Adrenal gland (tissue), 19 donors: ENCODE measurements at regions of chr19 and their contacts with region 1.

Region 1: DNA sequence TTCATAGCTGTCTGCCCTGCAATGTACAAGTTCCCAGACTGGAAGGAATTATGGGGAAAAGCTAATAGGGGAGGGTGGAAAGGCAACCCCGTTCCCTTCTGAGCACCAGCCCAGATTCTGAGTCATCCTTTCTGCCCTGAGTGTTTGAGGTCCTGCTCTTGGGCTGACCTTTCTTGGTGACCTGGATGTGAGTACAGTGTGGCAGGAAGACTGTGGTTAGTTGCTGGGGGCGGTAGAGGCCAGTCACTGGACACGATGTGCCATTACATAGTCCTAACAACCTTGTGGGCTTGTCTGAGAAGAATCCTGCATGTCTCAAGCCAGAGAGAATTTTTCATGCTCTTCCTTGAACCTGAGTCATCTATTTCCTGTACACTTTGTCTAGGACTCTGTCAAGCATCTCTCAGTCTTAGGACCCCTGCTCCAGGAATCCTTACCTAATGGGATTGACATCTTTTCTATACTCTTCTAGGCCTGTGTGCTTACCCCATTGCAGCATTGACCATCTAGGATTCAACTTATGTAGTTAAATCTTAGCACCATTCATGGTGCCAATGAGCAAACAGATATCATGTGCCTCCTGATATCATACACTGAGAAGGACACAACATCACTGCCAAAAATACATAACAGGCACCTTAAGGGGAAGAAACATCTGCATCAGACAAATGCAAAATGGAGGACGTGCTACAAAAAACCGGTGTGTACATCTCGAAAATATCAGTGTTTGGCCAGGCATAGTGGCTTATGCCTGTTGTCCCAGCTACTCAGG is 8.1 kb upstream of the ANGPTL4 start:
- DNase-seq: peak in 6 of 7 donors; percentile 78 to 89 (median 80)
- H3K4me3 ChIP-seq: no peak overlapping the region
- H3K27ac ChIP-seq: peak overlapping the region in 4 of 5 donors; percentile 44 to 83 (median 58)
- H3K4me1 ChIP-seq: peaks cover 5 to 19% of the 10 kb centered on the region in 2 donors
- H3K27me3 ChIP-seq: no peaks in the 10 kb centered on the region
- CTCF ChIP-seq: no peak
- POLR2A ChIP-seq: peak in 1 of 2 donors; percentile 22

Region 2: GRCh38 chr19:8185343-8186068 is 170.3 kb before region 1 on chr19:
- intact Hi-C with region 1: no loop called
- DNase-seq: no peak
- H3K4me3 ChIP-seq: no peak overlapping the region
- H3K27ac ChIP-seq: no peak overlapping the region
- H3K4me1 ChIP-seq: no peaks in the 10 kb centered on the region
- H3K27me3 ChIP-seq: no peaks in the 10 kb centered on the region
- CTCF ChIP-seq: no peak
- POLR2A ChIP-seq: no peak

Region 3: DNA sequence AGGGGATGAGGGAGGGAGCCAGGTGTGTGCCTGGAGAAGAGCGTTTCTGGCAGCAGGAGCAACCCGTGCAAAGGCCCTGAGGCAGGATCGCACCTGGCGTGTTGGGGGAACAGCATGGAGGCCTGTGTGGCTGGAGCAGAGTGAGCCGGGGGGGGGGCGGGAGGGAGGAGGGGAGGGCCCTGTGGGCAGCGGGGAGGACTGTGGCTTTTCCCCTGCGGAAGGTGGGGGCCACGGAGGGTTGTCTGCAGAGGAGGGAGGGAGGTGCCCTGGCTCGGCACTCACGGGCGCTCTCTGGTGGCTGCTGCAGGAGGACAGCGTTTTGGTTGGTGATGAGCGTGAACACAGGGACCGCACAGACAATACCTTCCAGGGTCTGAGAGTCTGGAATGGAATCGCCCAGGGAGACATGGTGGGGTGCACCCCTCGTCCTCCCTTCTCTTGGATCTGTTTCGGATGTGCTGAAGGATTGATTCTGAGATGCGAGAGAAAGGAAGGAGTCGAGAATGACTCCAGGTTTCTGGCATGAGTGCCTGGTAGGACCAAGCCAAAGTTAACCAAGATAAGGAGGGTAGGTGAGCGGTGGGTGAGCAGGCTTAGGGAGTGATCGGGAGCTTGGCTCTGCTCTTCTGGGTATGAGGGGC is 40.9 kb after region 1 on chr19:
- intact Hi-C with region 1: loop called (anchors 2 to 5 kb)
- DNase-seq: peak; percentile 50 to 81 (median 66)
- H3K4me3 ChIP-seq: no peak overlapping the region
- H3K27ac ChIP-seq: no peak overlapping the region
- H3K4me1 ChIP-seq: peaks cover 26 to 54% of the 10 kb centered on the region in 2 donors
- H3K27me3 ChIP-seq: no peaks in the 10 kb centered on the region
- CTCF ChIP-seq: peak; percentile 24 to 75 (median 58)
- POLR2A ChIP-seq: no peak

Region 4: DNA sequence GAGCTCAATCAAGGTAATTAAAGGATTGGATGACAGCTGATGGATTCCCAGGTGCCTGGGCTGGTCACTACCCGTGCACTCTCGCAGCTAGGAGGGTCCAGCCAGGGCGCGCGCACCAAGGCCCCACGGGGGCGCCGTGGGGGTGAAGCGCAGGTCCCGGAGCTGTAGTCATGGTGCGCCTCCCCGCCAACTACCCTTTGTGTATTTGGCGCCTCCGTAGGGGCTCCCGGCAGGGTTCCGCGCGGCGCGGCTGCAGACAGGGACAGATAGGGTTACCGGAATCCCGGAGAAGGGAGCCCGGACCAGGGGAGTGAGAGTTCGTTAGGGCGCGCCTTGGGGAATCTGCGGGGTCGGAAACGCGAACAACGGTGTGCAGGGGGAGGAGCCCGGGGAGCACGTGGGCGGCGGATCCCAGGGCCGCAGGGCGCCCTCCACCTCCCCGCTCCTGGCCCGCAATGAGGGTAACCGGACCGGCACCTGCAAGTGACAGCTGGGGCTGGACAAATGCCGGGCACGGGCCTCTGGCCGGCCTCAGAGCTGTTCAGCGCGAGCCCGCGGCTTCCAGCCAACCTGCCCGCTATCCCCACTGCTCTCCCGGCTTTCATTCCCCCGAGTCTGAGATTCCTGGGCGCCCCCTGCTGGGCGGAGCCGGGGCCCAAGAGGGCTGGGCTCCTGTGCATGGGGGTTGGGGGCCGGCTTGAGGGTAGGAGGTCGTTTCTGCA is 150.0 kb after region 1 on chr19:
- intact Hi-C with region 1: loop called (anchors 5 to 10 kb)
- DNase-seq: peak; percentile 72 to 87 (median 84)
- H3K4me3 ChIP-seq: peak overlapping the region in 2 of 4 donors; percentile 60 to 62
- H3K27ac ChIP-seq: peak overlapping the region in 2 of 5 donors; percentile 6 to 24
- H3K4me1 ChIP-seq: peaks cover 11 to 12% of the 10 kb centered on the region in 2 donors
- H3K27me3 ChIP-seq: no peaks in the 10 kb centered on the region
- CTCF ChIP-seq: peak; percentile 75 to 88 (median 86)
- POLR2A ChIP-seq: no peak

Region 5: GRCh38 chr19:8517551-8518442 is 162.0 kb after region 1 on chr19:
- intact Hi-C with region 1: no loop called
- DNase-seq: peak in 3 of 7 donors; percentile 43 to 55 (median 49)
- H3K4me3 ChIP-seq: no peak overlapping the region
- H3K27ac ChIP-seq: peak overlapping the region in 2 of 5 donors; percentile 67 to 79
- H3K4me1 ChIP-seq: peaks cover 15 to 18% of the 10 kb centered on the region in 2 donors
- H3K27me3 ChIP-seq: no peaks in the 10 kb centered on the region
- CTCF ChIP-seq: no peak
- POLR2A ChIP-seq: no peak

Region 6: DNA sequence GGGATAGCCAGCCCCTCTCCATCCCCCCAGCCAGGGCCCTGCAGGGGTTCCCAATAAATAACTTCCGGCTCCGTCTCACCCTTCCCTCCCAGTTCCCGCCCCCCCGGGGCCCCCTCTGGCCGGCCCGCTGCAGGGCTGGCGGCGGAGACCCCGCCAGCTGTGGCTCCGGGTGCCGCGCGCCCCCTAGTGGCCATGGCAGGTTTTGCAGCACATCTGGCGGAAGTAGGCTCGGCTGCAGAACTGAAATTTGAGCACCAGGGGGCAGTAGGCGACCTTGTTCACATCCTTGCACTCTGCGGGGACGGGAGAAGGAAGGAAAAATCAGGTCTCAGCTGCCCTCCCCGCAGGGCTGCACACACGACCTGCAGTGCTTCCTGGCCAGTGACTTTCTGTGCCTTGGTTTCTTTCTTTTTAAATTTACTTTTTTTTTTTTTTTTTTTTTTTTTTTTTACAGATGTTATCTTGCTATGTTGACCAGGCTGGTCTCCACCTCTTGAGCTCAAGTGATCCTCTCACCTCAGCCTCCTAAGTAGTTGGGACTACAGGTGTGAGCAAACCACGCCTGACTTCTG is 225.0 kb after region 1 on chr19:
- intact Hi-C with region 1: loop called in 1 of 2 experiments (anchors 10 kb)
- DNase-seq: peak; percentile 77 to 89 (median 85)
- H3K4me3 ChIP-seq: no peak overlapping the region
- H3K27ac ChIP-seq: no peak overlapping the region
- H3K4me1 ChIP-seq: no peaks in the 10 kb centered on the region
- H3K27me3 ChIP-seq: no peaks in the 10 kb centered on the region
- CTCF ChIP-seq: peak; percentile 97 to 100 (median 98)
- POLR2A ChIP-seq: no peak